ENCODE measurements at regions of chr3 and their contacts with region 1.

Region 1: DNA sequence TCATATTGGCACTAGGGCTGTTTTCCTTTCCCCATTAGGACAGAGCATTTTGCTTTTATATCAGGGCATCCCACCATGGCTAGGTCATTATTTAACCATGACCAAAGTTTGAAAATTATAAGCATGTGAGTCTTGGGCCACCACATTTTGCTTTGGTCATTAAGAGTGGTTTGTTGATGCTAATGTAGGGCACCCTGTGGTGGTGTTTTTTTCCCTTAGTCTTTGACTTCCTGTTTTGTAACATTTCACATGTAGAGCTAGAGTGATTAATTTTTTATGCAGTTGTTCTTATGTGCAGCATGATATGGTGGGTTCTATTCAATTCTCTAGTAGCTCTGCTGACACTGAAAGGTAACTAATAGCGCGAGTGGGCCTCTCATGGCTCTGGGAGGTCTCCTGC is 249.6 kb upstream of the ROBO1 start:
- DNase-seq: peak; percentile 42
- H3K4me3 ChIP-seq: no peak overlapping the region
- H3K27ac ChIP-seq: no peak overlapping the region
- H3K4me1 ChIP-seq: peaks cover 21% of the 10 kb centered on the region
- H3K27me3 ChIP-seq: no peaks in the 10 kb centered on the region
- CTCF ChIP-seq: no peak
- POLR2A ChIP-seq: no peak

Region 2: DNA sequence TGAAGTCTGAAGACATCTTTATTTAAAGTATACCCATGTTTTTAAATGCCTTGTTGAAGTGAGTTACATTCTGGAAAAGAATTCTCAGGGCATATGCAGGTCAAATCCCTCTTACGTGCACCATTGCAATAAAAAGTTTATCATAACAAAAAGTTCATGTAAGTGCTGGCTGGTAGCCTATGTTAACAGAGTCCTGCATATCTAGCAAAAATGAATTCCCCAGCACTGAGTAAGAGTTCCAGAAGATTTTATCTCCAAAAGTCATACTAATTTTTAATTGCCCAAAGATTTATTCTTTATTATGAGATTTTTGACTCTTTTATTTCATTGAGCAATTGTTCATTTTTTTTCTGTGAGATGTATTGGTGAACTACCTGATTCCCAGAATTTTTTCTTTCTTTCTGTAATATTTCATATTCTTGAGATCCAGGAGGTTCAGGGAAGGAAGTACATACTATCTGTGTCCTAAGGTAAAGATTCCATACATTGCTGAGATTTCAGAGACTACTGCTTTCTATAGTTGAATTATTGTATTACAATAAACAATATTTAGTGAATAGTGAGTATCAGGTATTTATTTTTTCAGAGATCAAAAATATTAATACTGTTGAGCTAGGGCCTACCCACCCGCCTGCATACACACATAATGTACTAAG is 144.7 kb before region 1 on chr3:
- CTCF ChIA-PET with region 1: no interaction called
- POLR2A ChIA-PET with region 1: no interaction called
- dilution Hi-C with region 1: no loop called
- intact Hi-C with region 1: loop called (anchors 5 kb)
- DNase-seq: peak; percentile 96
- H3K4me3 ChIP-seq: no peak overlapping the region
- H3K27ac ChIP-seq: peak overlapping the region; percentile 80
- H3K4me1 ChIP-seq: peaks cover 24% of the 10 kb centered on the region
- H3K27me3 ChIP-seq: no peaks in the 10 kb centered on the region
- CTCF ChIP-seq: no peak
- POLR2A ChIP-seq: peak; percentile 48

Region 3: GRCh38 chr3:79983121-79983520 is 34.2 kb before region 1 on chr3:
- CTCF ChIA-PET with region 1: no interaction called
- POLR2A ChIA-PET with region 1: no interaction called
- dilution Hi-C with region 1: no loop called
- intact Hi-C with region 1: loop called (anchors 2 kb)
- DNase-seq: peak; percentile 80
- H3K4me3 ChIP-seq: no peak overlapping the region
- H3K27ac ChIP-seq: no peak overlapping the region
- H3K4me1 ChIP-seq: peaks cover 7% of the 10 kb centered on the region
- H3K27me3 ChIP-seq: no peaks in the 10 kb centered on the region
- CTCF ChIP-seq: no peak
- POLR2A ChIP-seq: no peak